ENCODE measurements at regions of chr2 and their contacts with region 1.

Region 1: DNA sequence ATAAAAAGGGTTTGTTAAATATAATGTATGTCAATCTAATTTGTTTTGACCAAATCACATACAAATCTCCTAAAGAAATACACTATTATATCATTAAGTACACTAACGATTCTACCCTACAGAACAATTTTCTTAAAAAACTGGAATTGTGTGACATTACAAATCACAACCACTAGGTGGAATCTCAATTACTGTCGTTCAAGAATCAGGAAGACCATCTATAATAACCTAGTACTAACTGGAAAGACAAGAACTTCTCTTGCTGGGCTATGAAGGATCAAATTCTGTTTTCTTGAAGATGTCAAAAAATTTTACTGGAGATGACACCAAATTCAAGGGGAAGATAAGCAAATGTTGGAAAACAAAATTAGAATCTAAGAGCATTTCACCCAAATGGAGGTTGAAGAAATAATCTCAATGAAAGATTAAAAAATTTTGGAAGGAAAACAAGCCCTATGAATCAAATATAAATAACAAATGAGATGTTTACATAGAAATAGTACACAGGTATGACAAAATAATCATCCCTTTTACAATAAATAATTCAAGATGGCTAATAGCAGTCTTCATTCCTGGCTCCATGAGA is 110.9 kb downstream of the STK39 start:
- DNase-seq: no peak
- H3K4me3 ChIP-seq: no peak overlapping the region
- H3K27ac ChIP-seq: no peak overlapping the region
- H3K4me1 ChIP-seq: no peaks in the 10 kb centered on the region
- H3K27me3 ChIP-seq: no peaks in the 10 kb centered on the region
- CTCF ChIP-seq: peak; percentile 56

Region 2: DNA sequence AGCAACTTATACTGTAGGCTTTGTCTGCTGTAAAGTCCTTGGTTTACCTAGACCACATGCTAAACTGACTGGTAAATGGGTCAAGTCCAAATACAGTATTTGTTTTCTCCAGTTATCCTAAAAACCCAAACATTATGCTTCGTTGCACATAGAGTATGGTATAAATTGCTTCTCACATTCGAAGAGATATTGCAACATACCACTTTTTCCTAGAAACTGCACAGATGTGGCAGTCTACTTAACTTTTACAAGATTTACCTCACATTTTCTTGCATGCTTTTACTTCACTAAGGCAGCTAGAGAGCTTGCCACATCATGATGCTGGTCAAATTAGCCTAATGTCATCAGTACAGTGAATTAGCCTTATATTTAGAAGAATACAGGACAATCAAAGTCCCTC is 1576.5 kb before region 1 on chr2:
- intact Hi-C with region 1: no loop called
- DNase-seq: no peak
- H3K4me3 ChIP-seq: no peak overlapping the region
- H3K27ac ChIP-seq: no peak overlapping the region
- H3K4me1 ChIP-seq: no peaks in the 10 kb centered on the region
- H3K27me3 ChIP-seq: no peaks in the 10 kb centered on the region
- CTCF ChIP-seq: no peak

Region 3: GRCh38 chr2:167814881-167815718 is 321.4 kb before region 1 on chr2:
- intact Hi-C with region 1: no loop called
- DNase-seq: no peak
- H3K4me3 ChIP-seq: no peak overlapping the region
- H3K27ac ChIP-seq: no peak overlapping the region
- H3K4me1 ChIP-seq: no peaks in the 10 kb centered on the region
- H3K27me3 ChIP-seq: no peaks in the 10 kb centered on the region
- CTCF ChIP-seq: no peak

Region 4: DNA sequence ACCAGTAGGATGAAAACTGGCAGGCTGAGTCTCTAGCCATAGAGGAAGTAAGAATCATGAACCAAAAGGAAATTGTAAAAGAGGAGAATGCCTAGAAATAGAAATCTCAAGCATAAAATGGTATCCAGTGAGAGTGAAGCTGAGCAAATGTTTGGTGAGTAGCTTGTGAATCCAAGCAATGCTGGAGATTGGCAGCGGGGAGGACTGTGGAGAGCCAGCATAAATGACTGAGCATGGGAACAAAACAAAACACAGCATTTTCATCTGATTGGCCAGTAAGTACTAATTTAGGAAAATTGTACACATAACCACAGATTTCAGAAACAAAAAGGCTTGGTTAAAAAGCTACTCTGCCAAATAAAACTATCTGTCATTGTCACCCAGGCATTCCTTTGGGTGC is 279.1 kb before region 1 on chr2:
- intact Hi-C with region 1: no loop called
- DNase-seq: no peak
- H3K4me3 ChIP-seq: no peak overlapping the region
- H3K27ac ChIP-seq: no peak overlapping the region
- H3K4me1 ChIP-seq: no peaks in the 10 kb centered on the region
- H3K27me3 ChIP-seq: no peaks in the 10 kb centered on the region
- CTCF ChIP-seq: no peak

Region 5: DNA sequence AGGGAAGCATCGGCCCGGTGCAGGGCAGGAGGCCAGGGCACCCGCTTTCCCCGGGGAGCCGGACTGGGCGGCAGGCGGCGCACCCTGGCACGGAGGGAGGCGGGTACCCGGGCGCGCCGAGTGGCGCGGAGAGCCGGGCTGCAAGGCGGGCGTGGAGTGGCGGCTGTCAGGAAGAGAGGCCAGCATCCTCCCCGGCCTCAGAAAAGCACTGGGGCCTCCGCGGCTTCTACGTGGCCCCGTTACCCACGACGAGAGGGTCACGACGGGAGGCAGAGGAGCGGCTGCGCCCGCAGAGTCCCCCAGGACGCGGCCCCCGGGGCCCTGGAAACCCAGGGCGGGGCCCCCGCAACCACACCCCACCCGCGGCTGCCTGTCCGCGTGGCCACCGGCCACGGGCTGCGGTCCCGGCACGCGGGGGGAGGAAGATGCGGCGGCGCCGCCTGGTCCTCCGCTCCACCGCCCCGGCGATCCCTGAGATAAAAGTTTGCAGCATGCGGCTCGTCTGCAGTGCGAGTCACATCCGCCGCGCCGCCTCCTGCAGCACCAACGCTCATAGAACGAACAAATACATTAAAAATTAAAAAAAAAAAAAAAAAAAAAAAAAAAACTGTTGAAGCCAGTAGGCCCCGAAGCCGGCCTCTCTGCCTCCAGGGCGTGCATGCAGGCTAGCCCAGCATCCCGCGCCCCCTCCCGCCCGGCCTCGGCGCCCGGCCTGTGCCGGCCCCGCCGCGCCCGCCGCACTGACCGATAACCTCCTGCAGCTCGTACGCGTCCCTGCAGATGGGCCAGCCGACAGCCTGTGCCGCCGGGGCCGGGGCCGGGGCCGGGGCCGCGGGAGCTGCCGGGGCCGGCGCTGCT is 110.2 kb after region 1 on chr2:
- intact Hi-C with region 1: loop called (anchors 5 kb)
- DNase-seq: peak; percentile 80
- H3K4me3 ChIP-seq: peak overlapping the region; percentile 75
- H3K27ac ChIP-seq: peak overlapping the region; percentile 86
- H3K4me1 ChIP-seq: peaks cover 13% of the 10 kb centered on the region
- H3K27me3 ChIP-seq: no peaks in the 10 kb centered on the region
- CTCF ChIP-seq: peak; percentile 29

Region 6: GRCh38 chr2:168336864-168337263 is 200.4 kb after region 1 on chr2:
- intact Hi-C with region 1: loop called (anchors 10 kb)
- DNase-seq: peak; percentile 77
- H3K4me3 ChIP-seq: no peak overlapping the region
- H3K27ac ChIP-seq: no peak overlapping the region
- H3K4me1 ChIP-seq: no peaks in the 10 kb centered on the region
- H3K27me3 ChIP-seq: no peaks in the 10 kb centered on the region
- CTCF ChIP-seq: peak; percentile 51

Measured in colonic mucosa (tissue), 4 donors.